ENCODE measurements at regions of chr2 and their contacts with region 1.

Region 1: GRCh38 chr2:215454519-215455246 is 18.8 kb upstream of the FN1 start:
- DNase-seq: no peak
- ATAC-seq: no peak

Region 2: DNA sequence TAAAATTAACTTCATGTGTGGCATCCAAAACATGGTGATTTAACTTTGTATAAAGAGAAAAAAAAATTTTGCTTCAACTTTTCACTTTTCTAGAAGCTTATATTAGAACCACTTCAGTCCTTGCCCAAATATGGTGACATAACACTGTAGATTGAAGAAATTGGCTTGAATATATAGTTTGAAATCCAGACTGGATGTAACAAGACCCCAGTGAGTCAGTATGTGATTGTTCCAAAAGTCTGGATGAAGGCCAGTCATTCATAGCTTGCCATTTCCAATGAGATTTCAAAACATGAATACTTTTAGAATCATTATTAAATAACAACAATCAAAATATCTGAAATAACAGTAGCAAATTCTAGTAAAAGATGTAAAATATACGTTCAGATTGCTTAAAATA is 86.0 kb after region 1 on chr2:
- intact Hi-C with region 1: no loop called
- DNase-seq: no peak
- ATAC-seq: peak; percentile 86

Region 3: GRCh38 chr2:215843579-215843978 is 388.9 kb after region 1 on chr2:
- intact Hi-C with region 1: loop called (anchors 10 kb)
- DNase-seq: no peak
- ATAC-seq: peak; percentile 77

Region 4: GRCh38 chr2:215920244-215921100 is 465.8 kb after region 1 on chr2:
- intact Hi-C with region 1: loop called (anchors 1 kb)
- DNase-seq: no peak
- ATAC-seq: peak; percentile 89